ENCODE measurements at regions of chr1 and their contacts with region 1.

Region 1: DNA sequence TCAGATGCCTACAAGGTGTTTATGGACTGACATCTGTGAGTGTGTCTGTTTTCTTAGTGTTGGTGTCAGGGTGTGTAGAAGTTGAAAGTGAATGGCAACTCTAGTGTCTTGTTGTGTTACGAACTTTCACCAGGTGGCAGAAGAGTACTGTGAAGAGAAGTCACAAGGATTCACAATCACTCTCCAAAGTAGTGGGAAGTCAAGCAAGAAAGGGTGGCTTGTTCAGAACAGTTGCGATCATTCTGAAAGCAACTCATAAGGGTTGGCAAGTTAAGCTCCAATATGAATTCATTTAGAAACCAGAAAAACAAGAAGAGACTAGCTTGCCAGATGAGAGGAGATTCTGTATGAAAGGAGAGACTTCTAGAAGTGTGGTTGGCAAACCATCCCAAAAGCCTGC is 86.1 kb downstream of the FASLG start:
- DNase-seq: peak; percentile 84
- H3K4me3 ChIP-seq: no peak overlapping the region
- H3K27ac ChIP-seq: no peak overlapping the region
- H3K4me1 ChIP-seq: peaks cover 19% of the 10 kb centered on the region
- H3K27me3 ChIP-seq: no peaks in the 10 kb centered on the region

Region 2: GRCh38 chr1:173202430-173203145 is 457.6 kb after region 1 on chr1:
- in situ Hi-C with region 1: loop called (anchors 10 kb)
- DNase-seq: peak; percentile 86
- H3K4me3 ChIP-seq: no peak overlapping the region
- H3K27ac ChIP-seq: peak overlapping the region; percentile 30
- H3K4me1 ChIP-seq: peaks cover 39% of the 10 kb centered on the region
- H3K27me3 ChIP-seq: no peaks in the 10 kb centered on the region

Region 3: GRCh38 chr1:173429471-173430402 is 684.7 kb after region 1 on chr1:
- in situ Hi-C with region 1: loop called (anchors 10 kb)
- DNase-seq: peak; percentile 97
- H3K4me3 ChIP-seq: peak overlapping the region; percentile 70
- H3K27ac ChIP-seq: peak overlapping the region; percentile 86
- H3K4me1 ChIP-seq: peaks cover 28% of the 10 kb centered on the region
- H3K27me3 ChIP-seq: no peaks in the 10 kb centered on the region

Region 4: DNA sequence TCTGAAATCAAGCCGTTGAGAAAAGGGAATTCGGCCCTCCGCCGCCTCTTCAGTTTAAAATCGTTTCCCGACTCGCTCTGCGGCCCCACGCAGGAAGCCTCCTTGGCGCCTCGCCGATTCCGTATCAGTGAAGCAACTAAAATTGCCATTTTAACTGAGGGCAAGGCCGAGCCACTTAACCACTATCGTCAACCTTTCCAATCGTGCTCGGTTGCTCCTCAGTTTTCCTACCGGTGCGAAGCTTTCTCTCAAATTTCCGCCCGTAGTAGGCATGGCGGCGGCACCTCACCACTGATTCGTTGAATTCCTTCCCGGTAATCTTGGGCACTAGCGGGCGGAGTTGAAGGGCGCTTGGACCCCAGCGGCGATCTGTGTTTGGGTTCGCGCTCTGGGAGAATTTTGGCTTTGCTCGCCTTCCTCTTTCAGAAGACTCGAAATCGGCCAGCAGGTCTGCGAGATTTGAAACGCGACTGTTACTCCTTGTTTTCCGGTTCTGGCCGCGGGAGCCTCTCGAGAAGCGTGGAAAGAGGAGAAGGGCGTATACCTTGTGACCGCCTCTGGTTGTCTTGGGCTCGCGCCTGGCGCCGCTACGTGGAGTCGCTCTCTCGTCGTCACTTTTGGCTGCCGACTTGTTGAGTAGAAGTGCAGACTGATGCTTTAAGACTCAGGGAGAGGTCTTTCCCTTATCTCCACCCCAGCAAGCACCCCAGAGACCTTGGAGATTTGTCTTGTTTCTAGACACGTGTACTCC is 1079.5 kb after region 1 on chr1 and contains the starts of genes CENPL and DARS2:
- in situ Hi-C with region 1: loop called (anchors 25 kb)
- DNase-seq: peak; percentile 100
- H3K4me3 ChIP-seq: peak within 1 kb of the TSS; percentile 93
- H3K27ac ChIP-seq: peak within 1 kb of the TSS; percentile 94
- H3K4me1 ChIP-seq: peaks cover 15% of the 10 kb centered on the region
- H3K27me3 ChIP-seq: no peaks in the 10 kb centered on the region
- total RNA-seq, gene CENPL: 14.9 and 16.9 TPM in 2 replicates
- total RNA-seq, gene DARS2: 12.1 and 14.5 TPM in 2 replicates